IMR-90 (cell line): ENCODE measurements at regions of chr15 and their contacts with region 1.

Region 1: GRCh38 chr15:62896978-62897647 is 145.4 kb upstream of the TPM1 start:
- DNase-seq: peak; percentile 99
- ATAC-seq: peak; percentile 86
- H3K4me3 ChIP-seq: peak overlapping the region; percentile 18; the same call in 1 of the 2 replicates
- H3K27ac ChIP-seq: peak overlapping the region; percentile 78
- H3K4me1 ChIP-seq: peaks cover 25% of the 10 kb centered on the region
- H3K27me3 ChIP-seq: no peaks in the 10 kb centered on the region
- CTCF ChIP-seq: no peak
- POLR2A ChIP-seq: no peak
- RAD21 ChIP-seq: peak; percentile 32; the same call in 1 of the 2 replicates

Region 2: DNA sequence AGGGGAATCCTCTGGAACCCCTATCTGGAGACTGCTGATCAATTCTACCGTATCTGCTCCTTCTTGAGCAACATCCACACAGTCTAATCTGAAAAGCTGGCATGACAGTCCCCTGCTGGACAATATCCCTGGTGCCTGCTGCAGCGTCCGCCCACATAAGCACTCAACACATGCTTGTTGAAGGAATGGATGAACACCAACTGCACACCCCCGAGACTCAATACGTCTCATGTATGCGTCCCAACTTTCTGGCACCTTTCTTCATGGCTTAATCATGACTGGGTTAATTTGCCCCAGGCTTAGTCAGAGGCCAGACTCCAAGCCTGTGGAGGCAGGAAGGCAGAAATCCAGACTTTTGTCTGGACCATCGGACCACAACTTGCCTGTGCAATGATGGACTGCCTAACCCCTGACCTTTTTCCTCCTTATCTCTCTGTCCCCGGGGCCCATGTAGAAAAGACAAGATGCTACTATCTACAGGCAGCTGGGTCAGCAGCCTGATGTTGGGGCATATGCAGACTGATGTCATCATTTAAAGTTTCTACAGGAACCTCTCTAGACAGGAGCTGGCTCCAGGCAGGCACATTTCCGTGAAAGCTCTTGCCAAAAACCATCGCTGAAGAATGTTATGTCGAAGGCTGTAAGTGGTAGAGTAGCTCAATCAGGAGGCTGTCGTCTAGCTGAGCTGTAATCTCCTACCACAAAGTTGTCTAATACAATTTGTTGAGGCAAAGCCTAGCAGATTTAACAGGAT is 31.3 kb after region 1 on chr15:
- CTCF ChIA-PET with region 1: interaction called, 6 read pairs
- POLR2A ChIA-PET with region 1: no interaction called
- dilution Hi-C with region 1: no loop called
- in situ Hi-C with region 1: no loop called
- intact Hi-C with region 1: loop called (anchors 2 kb)
- DNase-seq: peak; percentile 92
- ATAC-seq: peak; percentile 64
- H3K4me3 ChIP-seq: no peak overlapping the region
- H3K27ac ChIP-seq: peak overlapping the region; percentile 58
- H3K4me1 ChIP-seq: peaks cover 19% of the 10 kb centered on the region
- H3K27me3 ChIP-seq: no peaks in the 10 kb centered on the region
- CTCF ChIP-seq: peak; percentile 56
- POLR2A ChIP-seq: no peak
- RAD21 ChIP-seq: peak; percentile 74

Region 3: GRCh38 chr15:63019539-63020109 is 122.5 kb after region 1 on chr15:
- CTCF ChIA-PET with region 1: no interaction called
- POLR2A ChIA-PET with region 1: no interaction called
- dilution Hi-C with region 1: no loop called
- in situ Hi-C with region 1: no loop called
- intact Hi-C with region 1: loop called (anchors 1 kb)
- DNase-seq: peak; percentile 95
- ATAC-seq: peak; percentile 52
- H3K4me3 ChIP-seq: no peak overlapping the region
- H3K27ac ChIP-seq: no peak overlapping the region
- H3K4me1 ChIP-seq: peaks cover 32% of the 10 kb centered on the region
- H3K27me3 ChIP-seq: no peaks in the 10 kb centered on the region
- CTCF ChIP-seq: no peak
- POLR2A ChIP-seq: no peak
- RAD21 ChIP-seq: no peak

Region 4: DNA sequence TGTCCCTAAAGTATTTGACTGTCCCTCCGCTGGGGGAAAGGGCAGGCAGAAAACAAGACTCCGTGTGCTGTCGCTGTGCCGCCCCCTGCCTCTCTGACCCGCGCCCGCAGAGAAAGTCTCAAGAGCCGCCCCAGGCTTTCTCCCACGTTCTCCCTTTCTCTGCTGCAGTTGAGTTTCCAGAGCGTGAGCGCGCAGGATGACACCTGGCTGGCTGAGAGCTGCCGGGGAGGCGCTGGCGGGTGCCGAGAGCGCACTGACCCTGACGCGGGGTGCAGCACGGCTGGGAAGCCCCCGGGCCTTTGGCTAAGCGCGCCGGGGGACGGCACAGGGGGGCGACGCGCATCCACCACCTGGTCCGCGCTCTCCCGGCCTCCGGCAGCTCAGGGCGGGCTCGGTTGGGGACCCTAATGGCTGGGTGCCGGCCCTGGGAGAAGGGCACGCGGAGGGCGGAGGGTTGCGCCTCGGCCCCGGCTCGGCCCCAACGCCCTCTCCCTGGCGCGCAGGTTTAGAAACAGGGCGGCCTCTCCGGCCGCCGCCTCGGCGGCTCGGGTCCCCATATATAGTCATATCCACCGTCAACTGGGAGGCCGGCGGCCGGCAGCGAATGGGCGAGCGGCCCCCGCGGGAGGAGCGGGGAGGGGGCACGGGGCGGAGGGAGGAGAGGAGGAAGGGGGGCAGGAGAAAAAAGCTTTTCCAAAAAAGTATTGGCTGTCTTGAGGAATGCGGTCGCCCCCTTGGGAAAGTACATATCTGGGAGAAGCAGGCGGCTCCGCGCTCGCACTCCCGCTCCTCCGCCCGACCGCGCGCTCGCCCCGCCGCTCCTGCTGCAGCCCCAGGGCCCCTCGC is 145.1 kb after region 1 on chr15 and contains the start of gene TPM1:
- CTCF ChIA-PET with region 1: interaction called, 3 read pairs
- POLR2A ChIA-PET with region 1: interaction called, 8 read pairs
- dilution Hi-C with region 1: no loop called
- in situ Hi-C with region 1: loop called (anchors 10 kb)
- intact Hi-C with region 1: loop called (anchors 2 kb)
- DNase-seq: peak; percentile 93
- ATAC-seq: peak; percentile 85
- H3K4me3 ChIP-seq: peak within 1 kb of the TSS; percentile 84
- H3K27ac ChIP-seq: peak within 1 kb of the TSS; percentile 87
- H3K4me1 ChIP-seq: peaks cover 9% of the 10 kb centered on the region
- H3K27me3 ChIP-seq: no peaks in the 10 kb centered on the region
- CTCF ChIP-seq: peak; percentile 30; the same call in 1 of the 2 replicates
- POLR2A ChIP-seq: peak; percentile 97
- RAD21 ChIP-seq: peak; percentile 43
- total RNA-seq, gene TPM1: 661 and 997 TPM in 2 replicates

Region 5: DNA sequence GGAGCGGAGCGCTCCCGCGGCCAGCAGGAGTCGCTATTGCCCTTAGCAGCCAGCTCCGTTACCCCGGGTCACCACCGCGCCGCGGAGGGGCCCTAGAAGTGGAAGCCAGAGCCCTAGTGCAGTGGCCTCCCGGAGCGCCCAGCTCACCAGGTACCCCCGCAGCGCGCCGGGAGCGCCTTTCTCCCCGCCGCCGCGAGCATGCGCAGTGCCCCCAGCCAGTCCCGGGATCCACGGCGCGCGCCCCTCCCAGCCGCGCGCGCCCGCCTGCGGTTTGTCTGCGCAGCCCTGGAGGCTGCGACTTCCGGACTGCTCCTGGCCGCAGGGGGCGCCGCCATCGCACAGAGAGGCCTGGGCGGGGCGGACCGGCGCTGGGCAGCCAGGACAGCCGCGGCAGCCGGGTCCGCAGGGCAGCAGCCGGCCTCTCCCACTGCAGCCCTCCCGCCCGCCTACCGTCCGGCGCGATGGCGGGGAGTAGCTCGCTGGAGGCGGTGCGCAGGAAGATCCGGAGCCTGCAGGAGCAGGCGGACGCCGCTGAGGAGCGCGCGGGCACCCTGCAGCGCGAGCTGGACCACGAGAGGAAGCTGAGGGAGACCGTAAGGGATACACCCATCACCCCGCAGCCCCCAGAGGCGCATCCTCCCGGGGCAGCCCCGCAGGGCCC is 151.1 kb after region 1 on chr15:
- CTCF ChIA-PET with region 1: interaction called, 3 read pairs
- POLR2A ChIA-PET with region 1: interaction called, 8 read pairs
- dilution Hi-C with region 1: no loop called
- in situ Hi-C with region 1: loop called (anchors 10 kb)
- intact Hi-C with region 1: loop called (anchors 2 kb)
- DNase-seq: peak; percentile 92
- ATAC-seq: peak; percentile 60
- H3K4me3 ChIP-seq: peak overlapping the region; percentile 84
- H3K27ac ChIP-seq: peak overlapping the region; percentile 92
- H3K4me1 ChIP-seq: peaks cover 22% of the 10 kb centered on the region
- H3K27me3 ChIP-seq: no peaks in the 10 kb centered on the region
- CTCF ChIP-seq: peak; percentile 82
- POLR2A ChIP-seq: peak; percentile 79
- RAD21 ChIP-seq: peak; percentile 80